Activated CD4-positive, alpha-beta T cell treated with anti-CD3 and anti-CD28 coated beads for 36 hours (primary cell): ENCODE measurements at regions of chr22 and their contacts with region 1.

Region 1: DNA sequence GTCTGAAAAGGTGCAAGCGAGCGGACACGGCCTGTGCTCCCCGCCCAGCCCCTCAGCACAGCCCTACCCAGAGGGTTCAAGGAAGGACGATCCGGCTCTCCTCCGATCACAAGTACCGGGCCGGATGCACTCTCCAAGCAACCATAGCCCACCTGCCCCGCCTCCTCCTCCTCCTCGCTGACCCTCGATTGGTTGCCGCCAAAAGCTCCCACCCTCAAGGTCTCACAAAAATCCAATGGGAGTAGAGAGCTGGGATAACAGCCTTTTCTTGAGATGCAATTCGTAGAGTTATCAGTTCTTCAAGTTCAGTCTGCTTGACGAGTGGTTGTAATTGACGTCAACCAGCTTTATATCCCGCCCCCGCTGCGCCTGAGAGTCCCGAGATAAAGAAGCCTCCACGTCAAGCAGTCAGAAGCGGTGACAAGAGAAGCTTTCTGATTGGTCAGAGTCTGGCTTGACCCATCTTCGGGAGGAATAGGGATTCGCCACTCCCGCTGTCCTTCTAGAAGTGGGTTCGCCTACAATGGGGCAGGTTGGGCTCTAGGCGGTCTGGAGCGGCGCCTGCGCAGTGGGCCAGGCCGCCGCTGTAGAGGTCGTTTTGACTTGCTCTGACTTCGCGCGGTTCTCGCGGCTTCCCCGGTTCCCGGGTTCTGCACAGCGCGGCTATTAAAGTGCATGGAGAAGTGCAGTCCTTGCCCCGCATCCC is at the start of gene IFT27:
- DNase-seq: peak; percentile 98
- ATAC-seq: peak; percentile 97
- H3K4me3 Mint-ChIP-seq: peak within 1 kb of the TSS; percentile 84
- H3K27ac Mint-ChIP-seq: peak within 1 kb of the TSS; percentile 92
- H3K4me1 Mint-ChIP-seq: peaks cover 26% of the 10 kb centered on the region
- H3K27me3 Mint-ChIP-seq: no peaks in the 10 kb centered on the region
- total RNA-seq, gene IFT27: 14.9 to 21.6 TPM

Region 2: DNA sequence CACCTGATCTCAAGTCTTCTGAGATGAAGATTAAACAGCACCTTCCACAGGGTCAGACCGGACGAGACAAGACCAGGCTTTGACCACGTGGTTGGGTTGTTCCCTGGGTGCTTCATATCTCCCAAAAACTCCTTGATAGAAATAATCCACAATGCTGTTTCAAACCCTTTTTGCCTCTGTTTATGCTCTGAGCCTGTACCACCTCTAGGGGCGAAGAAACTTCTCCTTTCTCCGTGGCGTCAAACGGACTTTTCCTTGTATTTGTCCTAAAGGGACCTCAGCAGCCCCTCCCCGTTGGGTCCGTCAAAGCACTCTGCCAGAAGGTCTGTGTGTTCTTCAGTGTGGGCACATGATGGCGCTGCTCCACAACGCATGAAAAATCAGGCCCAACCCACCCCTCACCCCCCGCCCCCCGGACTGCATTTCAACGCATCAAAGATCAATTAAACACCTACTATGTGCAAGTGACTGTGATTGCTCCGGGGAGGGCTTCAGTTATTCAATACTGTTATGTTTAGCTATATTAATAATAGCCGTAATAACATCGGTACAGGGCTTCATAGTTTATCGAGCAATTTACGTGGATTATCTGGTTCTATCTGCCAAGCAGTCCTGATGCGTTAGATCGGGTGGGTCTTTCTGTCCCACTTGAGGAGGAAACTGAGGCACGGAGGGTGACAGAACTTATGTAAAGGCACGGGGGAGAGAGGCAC is 229.9 kb before region 1 on chr22:
- CTCF ChIA-PET with region 1: interaction called, 6 read pairs
- POLR2A ChIA-PET with region 1: no interaction called
- intact Hi-C with region 1: loop called in 1 of 2 experiments (anchors 2 kb)
- DNase-seq: peak; percentile 72
- ATAC-seq: peak; percentile 59
- H3K4me3 Mint-ChIP-seq: no peak overlapping the region
- H3K27ac Mint-ChIP-seq: no peak overlapping the region
- H3K4me1 Mint-ChIP-seq: peaks cover 8% of the 10 kb centered on the region
- H3K27me3 Mint-ChIP-seq: peaks cover 8% of the 10 kb centered on the region

Region 3: DNA sequence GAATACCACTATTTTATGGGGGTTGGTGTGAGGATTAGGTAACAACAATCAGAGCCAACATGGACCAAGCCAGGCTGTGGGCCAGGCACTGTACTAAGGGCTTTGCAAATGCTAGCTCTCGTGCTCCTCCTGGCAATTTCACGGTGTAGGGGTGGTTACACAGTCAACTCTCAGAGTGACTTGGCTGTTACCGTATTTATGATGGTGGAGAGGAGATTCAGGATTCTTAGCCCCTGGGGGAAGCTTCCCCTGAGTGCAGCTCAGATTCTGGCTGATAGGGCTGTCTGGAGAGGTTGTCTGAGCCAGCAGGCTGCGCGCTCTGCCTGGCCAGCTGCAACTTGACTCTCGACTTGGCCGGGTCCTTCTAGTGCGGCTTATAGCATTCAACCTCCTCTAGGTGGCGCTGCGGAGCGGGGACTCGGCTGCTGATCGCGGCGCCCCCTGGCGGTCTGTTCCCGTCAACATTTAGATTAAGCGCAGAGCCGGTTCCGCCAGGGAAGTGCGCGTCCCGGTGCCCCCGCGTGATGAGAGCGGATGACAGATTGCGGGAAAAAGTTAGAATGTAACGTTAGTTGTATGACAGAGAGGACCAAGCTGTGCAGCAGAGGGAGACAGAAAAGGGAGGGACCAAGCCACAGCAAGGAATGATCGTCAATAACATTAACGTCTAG is 80.1 kb after region 1 on chr22:
- CTCF ChIA-PET with region 1: interaction called, 39 read pairs
- POLR2A ChIA-PET with region 1: interaction called, 6 read pairs
- intact Hi-C with region 1: loop called in 1 of 2 experiments (anchors 1 kb)
- DNase-seq: peak; percentile 97
- ATAC-seq: peak; percentile 58
- H3K4me3 Mint-ChIP-seq: no peak overlapping the region
- H3K27ac Mint-ChIP-seq: no peak overlapping the region
- H3K4me1 Mint-ChIP-seq: peaks cover 28% of the 10 kb centered on the region
- H3K27me3 Mint-ChIP-seq: peaks cover 2% of the 10 kb centered on the region

Region 4: DNA sequence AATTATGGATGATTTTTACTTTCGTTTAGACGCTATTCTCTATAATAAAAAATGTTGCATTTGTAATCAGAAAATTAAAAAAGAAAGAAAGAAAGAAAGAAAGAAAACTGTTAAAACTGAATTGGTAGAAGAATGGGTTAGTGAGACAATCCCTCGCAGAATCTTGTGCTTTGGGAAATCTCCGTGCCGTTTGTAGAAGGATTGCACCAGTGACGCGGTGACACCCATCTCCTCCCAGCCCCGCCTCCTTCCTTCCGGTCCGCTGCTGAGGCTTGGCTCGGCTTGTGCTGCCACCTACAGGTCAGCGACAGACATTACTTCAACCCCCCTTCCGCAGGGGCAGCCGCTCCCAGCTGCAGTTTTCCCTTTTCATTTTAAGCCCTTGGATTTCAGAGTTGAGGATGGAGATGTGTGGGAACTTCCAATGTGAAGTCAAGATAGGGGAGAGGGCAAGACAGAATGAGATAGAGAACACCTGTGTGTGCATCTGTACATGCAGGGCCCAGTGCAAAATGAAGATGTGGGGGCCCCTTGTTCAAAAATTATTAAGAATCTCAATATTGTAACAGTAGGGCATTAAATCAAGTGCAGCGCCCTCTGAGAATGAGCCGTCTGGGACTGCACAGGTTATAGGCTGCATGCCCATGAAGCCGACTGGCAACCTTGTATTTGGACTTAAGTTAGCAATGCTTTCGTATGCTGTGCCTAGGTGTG is 202.0 kb after region 1 on chr22:
- CTCF ChIA-PET with region 1: interaction called, 17 read pairs
- POLR2A ChIA-PET with region 1: interaction called, 12 read pairs
- intact Hi-C with region 1: loop called in 1 of 2 experiments (anchors 1 kb)
- DNase-seq: peak; percentile 95
- ATAC-seq: peak; percentile 86
- H3K4me3 Mint-ChIP-seq: peak overlapping the region; percentile 76
- H3K27ac Mint-ChIP-seq: peak overlapping the region; percentile 77
- H3K4me1 Mint-ChIP-seq: peaks cover 8% of the 10 kb centered on the region
- H3K27me3 Mint-ChIP-seq: no peaks in the 10 kb centered on the region

Region 5: DNA sequence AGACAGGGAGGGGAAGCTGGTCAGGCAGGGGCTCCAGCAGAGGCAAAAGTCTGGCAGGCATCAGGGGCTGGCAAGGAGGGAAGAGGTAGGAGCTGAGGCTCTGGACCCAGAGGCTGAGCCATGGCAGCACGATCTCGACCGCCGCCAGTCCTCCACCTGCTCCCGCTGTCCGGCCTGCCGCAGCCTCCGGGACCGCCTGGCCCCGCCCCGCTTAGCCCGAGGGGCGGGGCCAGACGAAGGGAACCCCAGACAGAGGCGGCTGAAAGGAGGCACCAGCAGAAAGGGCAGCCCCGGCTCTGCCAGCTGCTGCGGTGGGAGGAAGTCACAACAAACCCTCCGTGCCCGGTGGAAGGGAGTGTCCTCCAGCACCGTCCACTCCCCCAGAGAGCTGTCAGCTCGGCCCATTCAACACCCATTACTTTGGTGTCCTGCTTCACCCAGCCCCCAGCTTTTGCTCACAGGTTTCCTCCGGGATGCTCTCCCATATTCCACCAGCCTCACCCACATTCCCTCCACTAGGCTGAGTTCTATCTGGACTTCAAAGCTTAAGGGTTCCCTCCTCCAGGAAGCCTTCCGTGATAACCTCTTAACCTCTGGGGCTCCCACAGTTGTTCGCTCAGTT is 710.2 kb after region 1 on chr22 and contains the start of gene MFNG:
- CTCF ChIA-PET with region 1: no interaction called
- POLR2A ChIA-PET with region 1: no interaction called
- intact Hi-C with region 1: loop called in 1 of 2 experiments (anchors 2 kb)
- DNase-seq: peak; percentile 89
- ATAC-seq: peak; percentile 70
- H3K4me3 Mint-ChIP-seq: peak within 1 kb of the TSS; percentile 92
- H3K27ac Mint-ChIP-seq: peak within 1 kb of the TSS; percentile 92
- H3K4me1 Mint-ChIP-seq: peaks cover 64% of the 10 kb centered on the region
- H3K27me3 Mint-ChIP-seq: no peaks in the 10 kb centered on the region
- total RNA-seq, gene MFNG: 108 to 125 TPM